ENCODE measurements at regions of chr2 and their contacts with region 1.

Region 1: DNA sequence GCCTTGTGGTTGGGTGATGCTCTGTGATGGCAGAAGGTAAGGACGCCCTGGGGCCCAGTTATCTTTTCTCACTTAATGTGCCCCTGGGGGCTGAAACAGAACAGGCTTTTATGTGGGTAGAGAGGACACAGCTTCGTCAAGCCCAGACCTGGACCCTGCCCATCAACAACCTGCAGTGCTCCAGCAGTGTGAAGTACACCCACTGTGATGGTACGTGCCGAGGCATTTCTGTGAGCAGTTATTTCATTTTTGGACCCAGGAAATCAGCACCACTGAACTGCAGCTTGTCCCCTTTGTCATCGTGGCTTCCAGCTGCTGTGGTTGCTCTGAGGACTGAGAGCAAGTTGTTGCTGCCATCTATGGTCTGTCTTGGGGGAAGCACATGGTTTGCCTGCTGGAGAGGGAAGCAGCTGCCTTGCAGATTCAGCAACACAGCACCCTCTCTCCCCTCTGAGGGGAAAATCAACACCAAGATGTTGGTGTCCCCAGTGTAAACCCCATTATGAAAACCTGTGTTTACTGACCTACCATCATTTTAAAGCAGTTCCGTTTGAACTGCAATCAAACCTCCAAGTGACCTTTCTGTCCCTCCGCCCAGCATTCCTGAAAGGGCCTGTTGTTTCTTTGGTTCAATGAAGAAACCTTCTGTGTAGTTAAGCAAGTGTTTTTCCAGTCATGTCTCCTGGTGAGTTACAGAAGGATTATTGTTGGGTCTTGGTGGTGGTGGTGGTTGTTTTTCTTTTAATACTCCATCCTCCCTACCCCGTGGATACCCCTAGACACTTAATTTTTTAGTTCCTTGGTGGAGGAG is 158.2 kb downstream of the MGAT5 start:
- DNase-seq: peak; percentile 72
- H3K4me3 ChIP-seq: no peak overlapping the region
- H3K27ac ChIP-seq: peak overlapping the region in 3 of 4 donors; percentile 11 to 18 (median 14)
- H3K4me1 ChIP-seq: peaks cover 10 to 38% (median 19%) of the 10 kb centered on the region in 4 donors
- H3K27me3 ChIP-seq: no peaks in the 10 kb centered on the region
- CTCF ChIP-seq: peak; percentile 53 to 75 (median 59)
- EP300 ChIP-seq: no peak
- POLR2A ChIP-seq: no peak

Region 2: DNA sequence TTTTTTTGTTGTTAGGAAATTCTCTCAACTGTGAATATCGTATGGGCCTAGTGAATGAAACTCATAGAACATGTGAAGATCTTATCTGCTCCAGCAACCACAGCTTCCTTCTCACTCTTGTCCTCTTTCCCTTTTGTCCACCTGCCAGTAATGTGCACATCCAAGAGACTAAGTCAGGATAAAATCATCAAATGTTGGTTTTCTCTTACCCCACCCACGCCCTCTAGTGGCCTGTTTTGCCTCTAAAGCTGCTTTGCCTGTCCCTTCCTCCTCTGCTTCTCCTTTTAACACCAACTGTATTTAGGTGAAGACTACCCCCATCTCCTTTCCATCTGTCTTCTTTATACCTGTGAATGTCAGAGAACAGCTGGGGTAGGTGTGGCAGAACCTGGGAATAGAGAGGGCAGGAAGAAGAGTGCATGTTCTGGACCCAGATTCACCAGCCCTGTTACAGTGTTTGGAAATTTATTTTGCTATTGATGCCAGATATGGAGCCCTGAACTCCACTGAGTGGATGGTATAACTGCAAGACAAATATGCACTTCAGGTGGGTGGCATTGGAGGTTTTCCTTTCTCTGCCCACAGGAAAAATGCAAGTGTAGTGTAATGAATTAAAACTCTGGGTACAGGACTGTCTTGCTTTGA is 166.6 kb before region 1 on chr2:
- in situ Hi-C with region 1: loop called in 1 of 4 experiments (anchors 25 kb)
- intact Hi-C with region 1: no loop called
- DNase-seq: peak; percentile 84
- H3K4me3 ChIP-seq: no peak overlapping the region
- H3K27ac ChIP-seq: no peak overlapping the region
- H3K4me1 ChIP-seq: peaks cover 0 to 36% (median 10%) of the 10 kb centered on the region in 4 donors
- H3K27me3 ChIP-seq: no peaks in the 10 kb centered on the region
- CTCF ChIP-seq: peak; percentile 66 to 75 (median 70)
- EP300 ChIP-seq: no peak
- POLR2A ChIP-seq: no peak

Measured in transverse colon (tissue), 4 donors.